HCT116 (cell line): ENCODE measurements at regions of chr1 and their contacts with region 1.

Region 1: GRCh38 chr1:172429331-172430127 is 9.0 kb downstream of the C1orf105 start:
- DNase-seq: peak; percentile 63
- ATAC-seq: peak; percentile 88
- H3K4me3 ChIP-seq: no peak overlapping the region
- H3K27ac ChIP-seq: no peak overlapping the region
- H3K4me1 ChIP-seq: no peaks in the 10 kb centered on the region
- H3K27me3 ChIP-seq: no peaks in the 10 kb centered on the region
- CTCF ChIP-seq: peak; percentile 74 to 99 (median 88)
- POLR2A ChIP-seq: no peak
- RAD21 ChIP-seq: peak; percentile 92

Region 2: DNA sequence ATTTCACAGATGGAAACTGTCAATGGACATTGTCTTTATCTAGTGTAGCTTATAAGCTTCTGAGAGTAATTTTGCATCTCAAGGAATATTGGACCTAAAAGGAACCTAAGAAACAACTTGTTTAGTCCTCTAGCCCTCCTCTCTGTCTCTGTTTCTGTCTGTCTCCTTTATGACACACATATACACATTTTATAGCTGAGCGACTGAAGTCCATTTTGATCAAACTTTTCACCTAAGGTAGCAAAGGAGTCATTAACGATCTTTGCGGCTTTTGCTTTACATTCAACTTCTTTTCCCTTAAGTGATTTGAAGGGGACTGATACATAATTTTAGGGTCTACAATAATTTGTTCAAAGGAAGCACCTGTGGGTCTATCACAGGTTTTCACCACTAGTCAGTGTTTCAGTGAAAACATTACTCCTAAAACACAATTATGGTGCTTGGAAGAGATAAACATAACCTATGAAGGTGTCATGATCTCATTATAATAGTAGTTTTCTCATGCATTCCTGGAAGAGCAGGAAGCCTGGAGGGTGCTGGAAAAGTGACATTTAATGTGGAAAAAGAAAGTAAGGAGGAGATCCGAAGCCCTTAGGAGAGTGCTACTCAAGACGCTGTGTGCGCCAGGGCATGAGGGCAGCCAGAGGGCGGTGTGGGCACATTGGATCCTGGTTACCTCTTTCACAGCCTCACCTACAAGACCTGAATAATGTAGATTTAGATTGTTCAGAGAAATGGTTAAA is 339.6 kb before region 1 on chr1:
- CTCF ChIA-PET with region 1: no interaction called
- POLR2A ChIA-PET with region 1: no interaction called
- RAD21 ChIA-PET with region 1: no interaction called
- intact Hi-C with region 1: loop called (anchors 1 kb)
- DNase-seq: peak; percentile 33
- ATAC-seq: peak; percentile 97
- H3K4me3 ChIP-seq: no peak overlapping the region
- H3K27ac ChIP-seq: no peak overlapping the region
- H3K4me1 ChIP-seq: no peaks in the 10 kb centered on the region
- H3K27me3 ChIP-seq: no peaks in the 10 kb centered on the region
- CTCF ChIP-seq: peak; percentile 81 to 86 (median 84)
- POLR2A ChIP-seq: no peak
- RAD21 ChIP-seq: peak; percentile 87